Gastrocnemius medialis (tissue), 4 donors: ENCODE measurements at regions of chr1 and their contacts with region 1.

Region 1: GRCh38 chr1:156860113-156860627 is 495 bp upstream of the NTRK1 start:
- DNase-seq: no peak
- ATAC-seq: peak; percentile 71 to 78
- H3K4me3 ChIP-seq: peak overlapping the region; percentile 28 to 50 (median 45)
- H3K27ac ChIP-seq: no peak overlapping the region
- H3K4me1 ChIP-seq: peaks cover 10 to 22% of the 10 kb centered on the region in 2 donors
- H3K27me3 ChIP-seq: peaks cover 49 to 55% (median 51%) of the 10 kb centered on the region in 3 donors
- CTCF ChIP-seq: peak; percentile 61 to 91 (median 88)
- POLR2A ChIP-seq: no peak

Region 2: DNA sequence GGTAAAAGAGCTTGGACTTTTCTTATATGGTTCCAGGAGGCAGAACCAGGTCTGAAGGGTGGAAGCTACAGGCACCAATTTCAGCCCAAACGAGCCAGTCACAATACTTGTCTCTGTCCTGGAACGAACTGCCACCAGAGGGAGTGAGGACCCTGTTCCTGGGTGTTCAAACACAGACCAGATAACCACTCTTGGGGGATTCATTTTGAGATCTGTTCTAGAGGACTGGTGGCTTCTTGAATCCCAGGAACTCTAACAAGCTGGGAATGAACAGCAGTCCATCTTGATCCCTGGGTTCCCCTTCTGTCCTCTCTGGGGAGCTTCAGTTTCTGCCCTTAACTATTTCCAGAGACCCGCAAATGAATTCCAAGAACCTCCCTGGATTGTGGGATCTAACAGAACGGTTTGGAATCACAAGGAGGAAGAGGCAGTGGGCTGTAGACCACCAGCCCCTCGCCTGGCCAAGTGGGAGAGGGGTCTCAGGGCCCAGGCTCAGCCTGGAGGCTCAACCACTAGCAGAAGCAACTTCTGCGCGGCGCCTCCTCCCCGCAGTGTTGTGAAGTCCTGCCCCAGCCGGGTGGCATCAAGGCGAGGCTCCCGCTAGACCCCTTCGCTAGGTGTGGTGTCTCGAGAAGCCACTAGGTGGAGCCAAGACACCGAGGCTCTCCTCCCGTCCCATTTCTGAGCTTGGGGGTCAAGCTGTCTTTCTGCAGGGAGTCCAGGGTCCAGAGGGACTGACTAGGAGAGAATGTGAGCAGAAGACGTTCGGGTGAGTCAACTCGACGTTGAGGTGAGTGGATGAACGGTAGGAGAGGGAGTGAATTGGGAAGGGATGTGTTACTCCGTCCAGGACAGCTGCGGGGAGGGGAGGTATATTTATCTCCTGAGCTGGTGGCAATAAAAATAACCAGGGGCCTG is 170.9 kb before region 1 on chr1:
- in situ Hi-C with region 1: loop called in 1 of 4 experiments (anchors 25 kb)
- intact Hi-C with region 1: no loop called
- DNase-seq: peak; percentile 38 to 72
- ATAC-seq: peak; percentile 83 to 88
- H3K4me3 ChIP-seq: peak overlapping the region; percentile 20 to 36 (median 32)
- H3K27ac ChIP-seq: peak overlapping the region in 3 of 4 donors; percentile 29 to 64 (median 64)
- H3K4me1 ChIP-seq: peaks cover 9 to 13% of the 10 kb centered on the region in 2 donors
- H3K27me3 ChIP-seq: peaks cover 0 to 2% (median 0%) of the 10 kb centered on the region in 3 donors
- CTCF ChIP-seq: peak; percentile 92 to 95 (median 93)
- POLR2A ChIP-seq: no peak

Region 3: DNA sequence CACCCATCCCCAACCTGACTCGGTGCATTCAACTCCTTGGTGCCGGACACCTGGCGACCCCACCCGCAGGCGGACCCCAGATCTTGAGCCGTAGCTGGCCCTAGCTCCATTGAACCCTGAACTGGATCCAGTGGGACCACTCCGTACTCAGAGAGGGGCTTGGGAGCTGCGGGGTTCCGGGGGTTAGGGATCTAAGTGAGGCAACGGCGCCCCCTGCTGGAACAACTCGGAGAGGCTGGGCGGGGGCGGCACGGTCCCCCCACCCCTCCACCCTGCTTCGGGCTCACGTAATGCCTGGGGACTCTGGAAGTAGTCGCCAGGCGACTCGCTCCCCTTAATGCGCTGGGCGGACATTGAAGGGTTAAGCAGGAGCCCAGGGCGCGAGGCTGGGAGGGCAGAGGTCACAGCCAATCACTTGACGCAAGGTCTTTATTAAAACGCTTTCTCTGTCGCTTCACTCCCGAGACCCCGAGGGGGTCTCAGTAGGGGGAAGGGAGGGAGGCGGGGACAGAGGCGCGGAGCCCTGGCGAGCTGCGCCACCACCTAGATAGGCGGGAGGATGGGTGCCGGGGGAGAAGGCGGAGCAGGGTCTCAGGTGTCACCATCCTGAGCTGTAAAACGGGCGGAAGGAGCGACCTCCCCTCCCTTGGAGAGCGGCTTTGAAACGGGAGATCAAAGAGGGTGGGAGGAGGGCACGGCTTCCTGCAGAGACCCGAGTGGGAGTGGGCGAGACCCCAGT is 154.1 kb before region 1 on chr1:
- in situ Hi-C with region 1: loop called in 1 of 4 experiments (anchors 25 kb)
- intact Hi-C with region 1: no loop called
- DNase-seq: peak in 1 of 2 donors; percentile 36
- ATAC-seq: peak; percentile 33 to 49
- H3K4me3 ChIP-seq: peak overlapping the region; percentile 37 to 69 (median 50)
- H3K27ac ChIP-seq: peak overlapping the region; percentile 60 to 69 (median 65)
- H3K4me1 ChIP-seq: peaks cover 28% of the 10 kb centered on the region in 2 donors
- H3K27me3 ChIP-seq: peaks cover 38 to 43% (median 40%) of the 10 kb centered on the region in 3 donors
- CTCF ChIP-seq: peak; percentile 66 to 90 (median 87)
- POLR2A ChIP-seq: no peak

Region 4: GRCh38 chr1:156801409-156802121 is 58.6 kb before region 1 on chr1:
- in situ Hi-C with region 1: loop called in 1 of 4 experiments (anchors 5 kb)
- intact Hi-C with region 1: no loop called
- DNase-seq: no peak
- ATAC-seq: peak; percentile 48 to 60
- H3K4me3 ChIP-seq: no peak overlapping the region
- H3K27ac ChIP-seq: peak overlapping the region in 2 of 4 donors; percentile 13 to 35
- H3K4me1 ChIP-seq: peaks cover 45 to 62% of the 10 kb centered on the region in 2 donors
- H3K27me3 ChIP-seq: no peaks in the 10 kb centered on the region
- CTCF ChIP-seq: peak in 1 of 5 experiments; percentile 8
- POLR2A ChIP-seq: no peak

Region 5: GRCh38 chr1:156809711-156810366 is 50.3 kb before region 1 on chr1:
- in situ Hi-C with region 1: no loop called
- intact Hi-C with region 1: loop called (anchors 2 kb)
- DNase-seq: no peak
- ATAC-seq: no peak
- H3K4me3 ChIP-seq: no peak overlapping the region
- H3K27ac ChIP-seq: no peak overlapping the region
- H3K4me1 ChIP-seq: peaks cover 33 to 38% of the 10 kb centered on the region in 2 donors
- H3K27me3 ChIP-seq: no peaks in the 10 kb centered on the region
- CTCF ChIP-seq: no peak
- POLR2A ChIP-seq: no peak

Region 6: GRCh38 chr1:156838981-156839410 is 21.2 kb before region 1 on chr1:
- in situ Hi-C with region 1: no loop called
- intact Hi-C with region 1: loop called (anchors 1 kb)
- DNase-seq: no peak
- ATAC-seq: peak in 1 of 2 donors; percentile 55
- H3K4me3 ChIP-seq: no peak overlapping the region
- H3K27ac ChIP-seq: no peak overlapping the region
- H3K4me1 ChIP-seq: no peaks in the 10 kb centered on the region
- H3K27me3 ChIP-seq: peaks cover 2 to 21% (median 9%) of the 10 kb centered on the region in 3 donors
- CTCF ChIP-seq: peak; percentile 67 to 91 (median 85)
- POLR2A ChIP-seq: no peak

Region 7: DNA sequence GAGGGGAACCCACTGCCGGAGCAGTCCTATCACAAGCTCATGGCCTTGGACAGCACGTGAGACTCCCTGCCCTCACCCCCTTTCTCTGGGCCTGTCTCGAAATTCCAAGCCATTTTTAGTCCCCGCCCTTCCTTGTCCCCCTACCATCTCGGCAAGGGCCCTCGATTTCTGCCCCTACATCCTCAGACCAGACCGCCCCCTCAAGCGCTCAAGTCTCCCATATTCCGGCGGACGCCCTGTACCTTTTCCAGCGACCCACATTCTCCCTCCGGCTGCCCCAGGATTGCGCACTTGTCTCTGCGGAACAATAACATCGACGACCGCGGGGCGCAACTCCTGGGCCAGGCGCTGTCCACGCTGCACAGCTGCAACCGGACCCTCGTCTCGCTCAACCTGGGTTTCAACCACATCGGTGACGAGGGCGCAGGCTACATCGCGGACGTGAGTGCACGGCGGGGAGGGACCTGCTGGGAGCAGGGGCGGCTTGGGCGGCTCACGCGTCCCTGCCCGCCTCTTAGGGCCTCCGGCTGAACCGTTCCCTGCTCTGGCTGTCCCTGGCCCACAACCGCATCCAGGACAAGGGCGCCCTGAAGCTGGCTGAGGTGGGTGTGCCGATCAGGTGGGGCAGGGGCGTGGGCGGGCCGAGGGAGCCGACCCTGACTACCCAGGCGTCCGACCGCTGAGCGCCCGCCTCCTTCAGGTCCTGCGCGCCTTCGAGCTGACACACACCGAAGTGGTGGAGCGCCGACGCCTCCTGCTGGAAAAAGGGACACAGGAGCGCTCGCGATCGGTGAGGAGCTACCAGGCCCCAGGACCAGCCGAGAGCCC is 67.3 kb after region 1 on chr1:
- in situ Hi-C with region 1: no loop called
- intact Hi-C with region 1: no loop called
- DNase-seq: peak; percentile 30 to 34
- ATAC-seq: peak in 1 of 2 donors; percentile 26
- H3K4me3 ChIP-seq: peak overlapping the region in 3 of 4 donors; percentile 27 to 40 (median 34)
- H3K27ac ChIP-seq: no peak overlapping the region
- H3K4me1 ChIP-seq: peaks cover 3 to 13% of the 10 kb centered on the region in 2 donors
- H3K27me3 ChIP-seq: peaks cover 61 to 66% (median 63%) of the 10 kb centered on the region in 3 donors
- CTCF ChIP-seq: peak; percentile 22 to 60 (median 46)
- POLR2A ChIP-seq: no peak

Region 8: GRCh38 chr1:157419845-157420542 is 559.8 kb after region 1 on chr1:
- in situ Hi-C with region 1: no loop called
- intact Hi-C with region 1: no loop called
- DNase-seq: no peak
- ATAC-seq: no peak
- H3K4me3 ChIP-seq: no peak overlapping the region
- H3K27ac ChIP-seq: no peak overlapping the region
- H3K4me1 ChIP-seq: no peaks in the 10 kb centered on the region
- H3K27me3 ChIP-seq: no peaks in the 10 kb centered on the region
- CTCF ChIP-seq: no peak
- POLR2A ChIP-seq: no peak